H1 (cell line): ENCODE measurements at regions of chr5 and their contacts with region 1.

Region 1: DNA sequence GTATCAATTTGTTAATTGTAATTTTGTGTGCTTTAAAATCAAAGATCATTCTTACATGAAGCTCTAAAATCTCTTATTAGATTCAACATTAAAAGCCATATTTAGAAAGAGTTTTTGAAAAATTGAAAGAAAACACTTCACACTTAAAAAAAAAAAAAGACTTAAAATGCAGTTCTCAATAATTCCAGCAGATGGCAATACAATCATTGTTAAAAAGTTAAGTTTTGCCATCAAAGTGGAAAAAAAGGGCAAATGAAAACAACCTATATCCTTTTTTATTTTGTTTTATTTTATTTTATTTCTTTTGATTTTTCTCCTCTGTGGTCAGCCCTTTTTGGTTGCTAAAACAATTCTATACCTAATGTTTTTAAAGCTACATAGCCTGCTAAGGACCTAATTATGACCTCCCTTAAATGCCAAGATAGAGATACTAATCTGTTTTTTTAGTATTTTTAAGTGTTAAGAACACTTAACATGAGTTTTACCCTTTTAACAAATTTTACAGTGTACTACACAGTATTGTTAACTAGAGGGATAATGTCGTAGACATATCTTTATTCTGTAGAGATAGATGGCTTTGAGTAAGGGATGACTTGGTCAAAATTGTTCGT is 154.2 kb upstream of the DAB2 start:
- DNase-seq: no peak
- H3K4me3 ChIP-seq: no peak overlapping the region
- H3K27ac ChIP-seq: no peak overlapping the region
- H3K4me1 ChIP-seq: no peaks in the 10 kb centered on the region
- H3K27me3 ChIP-seq: no peaks in the 10 kb centered on the region
- CTCF ChIP-seq: peak in 1 of 3 experiments; percentile 21; a peak in 2 of 4 replicates
- EP300 ChIP-seq: no peak
- POLR2A ChIP-seq: no peak
- RAD21 ChIP-seq: peak in 1 of 2 experiments; percentile 56; a peak in 3 of 4 replicates

Region 2: DNA sequence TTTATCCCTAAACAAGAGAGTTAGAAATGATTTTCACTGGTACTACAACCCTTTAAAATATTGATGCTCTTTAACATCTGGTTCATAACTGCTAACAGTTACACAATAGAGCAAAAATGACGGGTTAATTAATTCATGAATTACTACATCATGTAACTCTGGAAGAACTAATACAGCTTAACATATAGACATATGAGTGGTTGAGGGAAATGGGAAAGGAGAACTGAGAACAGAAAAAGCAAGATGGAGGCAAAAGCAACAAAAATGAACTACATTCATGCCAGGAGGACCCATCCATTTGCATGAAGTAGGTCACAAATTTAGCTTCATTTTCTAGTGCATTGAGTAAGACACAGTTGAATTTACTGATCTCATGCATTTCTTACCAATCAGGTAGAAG is 276.5 kb before region 1 on chr5:
- CTCF ChIA-PET with region 1: no interaction called
- POLR2A ChIA-PET with region 1: no interaction called
- DNase-seq: no peak
- H3K4me3 ChIP-seq: no peak overlapping the region
- H3K27ac ChIP-seq: no peak overlapping the region
- H3K4me1 ChIP-seq: no peaks in the 10 kb centered on the region
- H3K27me3 ChIP-seq: no peaks in the 10 kb centered on the region
- CTCF ChIP-seq: no peak
- EP300 ChIP-seq: no peak
- POLR2A ChIP-seq: no peak
- RAD21 ChIP-seq: no peak

Region 3: GRCh38 chr5:39691993-39692392 is 113.0 kb after region 1 on chr5:
- CTCF ChIA-PET with region 1: interaction called, 11 read pairs
- POLR2A ChIA-PET with region 1: no interaction called
- DNase-seq: no peak
- H3K4me3 ChIP-seq: no peak overlapping the region
- H3K27ac ChIP-seq: no peak overlapping the region
- H3K4me1 ChIP-seq: no peaks in the 10 kb centered on the region
- H3K27me3 ChIP-seq: no peaks in the 10 kb centered on the region
- CTCF ChIP-seq: peak in 2 of 3 experiments; percentile 38 to 59; a peak in 3 of 4 replicates
- EP300 ChIP-seq: no peak
- POLR2A ChIP-seq: no peak
- RAD21 ChIP-seq: peak; percentile 50 to 60

Region 4: GRCh38 chr5:39955156-39955555 is 376.2 kb after region 1 on chr5:
- CTCF ChIA-PET with region 1: no interaction called
- POLR2A ChIA-PET with region 1: no interaction called
- DNase-seq: no peak
- H3K4me3 ChIP-seq: no peak overlapping the region
- H3K27ac ChIP-seq: no peak overlapping the region
- H3K4me1 ChIP-seq: no peaks in the 10 kb centered on the region
- H3K27me3 ChIP-seq: no peaks in the 10 kb centered on the region
- CTCF ChIP-seq: no peak
- EP300 ChIP-seq: no peak
- POLR2A ChIP-seq: no peak
- RAD21 ChIP-seq: no peak